Esophagus muscularis mucosa (tissue), 4 donors: ENCODE measurements at regions of chr16 and their contacts with region 1.

Region 1: DNA sequence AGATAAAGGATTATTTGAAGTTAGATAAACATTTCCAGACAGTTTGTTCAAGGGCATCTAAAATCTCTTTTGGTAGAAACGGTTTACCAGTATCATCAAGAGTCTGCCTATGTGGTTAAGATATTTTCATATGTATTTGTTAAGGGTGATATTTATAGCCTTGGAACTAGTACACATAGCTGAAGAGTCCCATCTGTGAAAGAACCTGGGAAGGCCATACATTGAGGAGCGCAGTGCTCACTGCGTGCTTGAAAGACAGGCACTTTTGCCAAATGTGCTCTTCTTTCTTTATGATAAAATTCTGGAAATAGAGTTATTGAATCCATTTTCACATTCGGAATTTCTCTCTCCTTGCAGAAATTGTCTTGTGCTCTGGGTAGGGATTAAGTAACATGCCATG is 7.7 kb downstream of the IGSF6 start:
- DNase-seq: no peak
- H3K4me3 ChIP-seq: peak overlapping the region in 3 of 4 donors; percentile 35 to 47 (median 37)
- H3K27ac ChIP-seq: peak overlapping the region in 3 of 4 donors; percentile 24 to 56 (median 25)
- H3K4me1 ChIP-seq: peaks cover 19 to 41% (median 27%) of the 10 kb centered on the region in 4 donors
- H3K27me3 ChIP-seq: no peaks in the 10 kb centered on the region
- CTCF ChIP-seq: no peak
- EP300 ChIP-seq: no peak
- POLR2A ChIP-seq: no peak

Region 2: DNA sequence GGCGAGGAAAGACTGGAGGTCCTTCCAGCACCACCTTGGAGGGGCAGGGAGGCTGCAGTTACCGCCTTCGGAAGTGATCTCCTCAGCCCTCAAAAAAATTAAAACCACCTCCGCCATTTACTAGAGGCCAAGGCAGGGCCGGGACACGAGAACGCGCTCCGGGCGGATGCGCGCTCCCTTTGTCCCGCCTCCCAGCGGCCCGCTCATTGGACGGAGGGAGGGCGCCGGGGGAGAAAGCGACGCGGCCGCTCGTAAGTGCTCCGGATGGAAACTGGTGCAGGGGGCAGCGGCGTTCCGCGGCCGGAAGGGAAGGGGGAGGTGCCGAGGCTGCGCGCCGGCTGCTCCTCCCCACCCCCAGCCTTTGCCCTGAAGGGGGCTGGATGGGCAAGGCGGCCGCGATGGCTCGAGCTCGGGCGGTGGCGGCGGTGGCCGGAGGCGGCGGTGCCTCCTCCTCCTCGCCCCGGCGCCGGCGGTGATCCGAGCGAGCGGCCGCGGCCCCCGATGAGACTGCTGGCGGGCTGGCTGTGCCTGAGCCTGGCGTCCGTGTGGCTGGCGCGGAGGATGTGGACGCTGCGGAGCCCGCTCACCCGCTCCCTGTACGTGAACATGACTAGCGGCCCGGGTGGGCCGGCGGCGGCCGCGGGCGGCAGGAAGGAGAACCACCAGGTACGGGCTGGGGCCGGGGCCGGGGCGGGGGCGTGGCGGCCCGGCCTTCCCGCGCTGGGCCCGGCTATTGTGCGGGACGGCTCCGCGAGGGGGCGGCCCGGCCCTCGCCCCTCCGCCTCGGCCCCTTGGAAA is 45.2 kb before region 1 on chr16 and contains the start of gene METTL9:
- intact Hi-C with region 1: loop called (anchors 5 kb)
- DNase-seq: peak; percentile 97
- H3K4me3 ChIP-seq: peak within 1 kb of the TSS; percentile 86 to 100 (median 92)
- H3K27ac ChIP-seq: peak within 1 kb of the TSS; percentile 93 to 99 (median 96)
- H3K4me1 ChIP-seq: peaks cover 16 to 53% (median 48%) of the 10 kb centered on the region in 4 donors
- H3K27me3 ChIP-seq: no peaks in the 10 kb centered on the region
- CTCF ChIP-seq: peak in 1 of 3 experiments; percentile 14
- EP300 ChIP-seq: no peak
- POLR2A ChIP-seq: peak; percentile 35
- total RNA-seq, gene METTL9: 70.2 to 122 (median 106) TPM